ENCODE measurements at regions of chr2 and their contacts with region 1.

Region 1: DNA sequence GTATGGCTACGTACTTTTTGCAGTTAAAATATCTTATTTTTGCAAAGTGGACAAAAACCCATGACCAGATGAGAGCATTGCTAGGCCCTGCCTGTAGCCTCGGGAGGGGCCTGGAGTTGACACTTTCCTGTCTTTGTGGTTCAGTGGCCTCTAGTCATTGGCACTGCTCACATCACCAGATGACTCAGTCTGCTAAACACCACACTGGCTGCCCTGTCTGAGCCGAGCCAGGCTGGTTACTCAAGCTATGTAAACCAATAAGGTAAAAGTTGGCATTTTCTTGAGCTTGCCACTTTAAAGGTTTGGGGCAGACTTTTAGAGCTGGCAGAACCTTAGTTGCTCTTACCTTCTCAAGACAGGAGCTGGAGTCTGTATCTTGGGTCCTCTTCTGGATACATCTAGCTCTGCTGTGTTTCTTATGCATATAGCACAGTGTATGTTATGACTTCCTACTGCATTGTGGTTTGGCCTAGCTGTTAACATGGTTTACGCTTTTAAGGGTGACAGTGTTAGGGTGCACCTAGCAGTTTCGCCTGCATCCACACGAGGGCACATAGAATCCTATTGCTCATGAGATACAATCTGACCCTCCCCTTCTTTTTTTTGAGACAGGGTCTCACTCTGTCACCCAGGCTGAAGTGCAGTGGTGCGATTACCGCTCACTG is 76.4 kb downstream of the AP1S3 start:
- DNase-seq: no peak
- H3K4me3 ChIP-seq: no peak overlapping the region
- H3K4me3 Mint-ChIP-seq: no peak overlapping the region
- H3K27ac Mint-ChIP-seq: peak overlapping the region; percentile 94
- H3K4me1 ChIP-seq: peaks cover 42% of the 10 kb centered on the region
- H3K4me1 Mint-ChIP-seq: peaks cover 48% of the 10 kb centered on the region
- H3K27me3 ChIP-seq: no peaks in the 10 kb centered on the region
- H3K27me3 Mint-ChIP-seq: no peaks in the 10 kb centered on the region
- CTCF ChIP-seq: no peak

Region 2: DNA sequence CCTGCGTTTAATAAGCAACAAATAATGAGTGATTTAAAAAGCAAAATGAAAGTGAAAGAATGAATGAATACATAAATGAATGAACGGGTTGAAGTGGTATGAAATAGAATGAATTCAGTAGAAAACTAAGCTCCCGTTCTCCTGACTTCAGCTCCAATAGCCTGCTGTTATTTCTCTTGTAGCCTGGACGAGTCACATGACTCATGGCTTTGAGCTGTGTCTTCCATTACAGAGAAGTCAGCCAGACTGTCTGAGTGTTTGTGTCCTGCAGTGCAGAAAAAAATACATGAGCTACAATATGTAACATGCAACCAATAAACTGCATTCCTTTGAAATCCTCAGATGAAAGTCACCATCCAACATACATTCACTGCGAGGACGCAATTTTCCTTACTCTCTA is 180.0 kb before region 1 on chr2:
- CTCF ChIA-PET with region 1: no interaction called
- POLR2A ChIA-PET with region 1: no interaction called
- intact Hi-C with region 1: no loop called
- DNase-seq: no peak
- H3K4me3 ChIP-seq: no peak overlapping the region
- H3K4me3 Mint-ChIP-seq: no peak overlapping the region
- H3K27ac Mint-ChIP-seq: no peak overlapping the region
- H3K4me1 ChIP-seq: no peaks in the 10 kb centered on the region
- H3K4me1 Mint-ChIP-seq: no peaks in the 10 kb centered on the region
- H3K27me3 ChIP-seq: no peaks in the 10 kb centered on the region
- H3K27me3 Mint-ChIP-seq: peaks cover 11% of the 10 kb centered on the region
- CTCF ChIP-seq: no peak

Region 3: GRCh38 chr2:223654384-223654915 is 106.5 kb before region 1 on chr2:
- CTCF ChIA-PET with region 1: no interaction called
- POLR2A ChIA-PET with region 1: no interaction called
- intact Hi-C with region 1: no loop called
- DNase-seq: no peak
- H3K4me3 ChIP-seq: no peak overlapping the region
- H3K4me3 Mint-ChIP-seq: no peak overlapping the region
- H3K27ac Mint-ChIP-seq: no peak overlapping the region
- H3K4me1 ChIP-seq: no peaks in the 10 kb centered on the region
- H3K4me1 Mint-ChIP-seq: no peaks in the 10 kb centered on the region
- H3K27me3 ChIP-seq: no peaks in the 10 kb centered on the region
- H3K27me3 Mint-ChIP-seq: peaks cover 15% of the 10 kb centered on the region
- CTCF ChIP-seq: no peak

Region 4: DNA sequence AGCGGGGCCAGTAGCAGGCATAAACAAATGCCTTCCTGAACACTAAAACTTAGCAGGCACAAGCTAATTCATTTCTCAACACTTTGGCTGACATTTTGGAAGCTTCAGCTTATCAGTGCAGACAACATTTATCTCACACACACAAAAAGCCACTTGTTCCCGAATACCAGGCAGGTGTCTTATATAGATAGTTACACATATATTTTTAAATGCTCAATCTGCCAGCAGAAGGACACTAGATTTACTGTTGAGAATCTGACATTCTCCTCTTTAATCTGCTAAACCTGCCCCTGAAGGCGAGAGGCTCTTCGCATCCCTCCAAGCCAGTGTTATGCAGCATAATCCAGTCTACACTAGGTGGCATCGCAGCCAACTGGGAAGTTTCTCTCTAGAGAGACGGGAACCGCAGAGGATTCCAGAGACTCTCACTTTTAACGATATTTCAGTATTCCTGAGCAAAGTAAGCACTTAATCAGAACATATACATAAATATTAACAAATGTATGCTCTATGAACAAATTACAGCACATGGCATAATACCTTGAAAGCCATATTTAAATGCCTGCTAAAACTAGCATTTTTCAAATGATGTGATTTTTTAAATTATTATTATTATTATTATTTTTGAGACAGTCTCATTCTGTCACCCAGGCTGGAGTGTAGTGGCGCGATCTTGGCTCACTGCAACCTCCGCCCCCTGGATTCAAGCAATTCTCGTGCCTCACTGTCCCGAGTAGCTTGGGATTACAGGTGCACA is 68.6 kb before region 1 on chr2:
- CTCF ChIA-PET with region 1: interaction called, 3 read pairs
- POLR2A ChIA-PET with region 1: no interaction called
- intact Hi-C with region 1: loop called (anchors 1 kb)
- DNase-seq: peak; percentile 71 to 76
- H3K4me3 ChIP-seq: no peak overlapping the region
- H3K4me3 Mint-ChIP-seq: no peak overlapping the region
- H3K27ac Mint-ChIP-seq: no peak overlapping the region
- H3K4me1 ChIP-seq: no peaks in the 10 kb centered on the region
- H3K4me1 Mint-ChIP-seq: no peaks in the 10 kb centered on the region
- H3K27me3 ChIP-seq: no peaks in the 10 kb centered on the region
- H3K27me3 Mint-ChIP-seq: no peaks in the 10 kb centered on the region
- CTCF ChIP-seq: peak; percentile 75 to 96

Region 5: GRCh38 chr2:223744573-223744972 is 16.4 kb before region 1 on chr2:
- CTCF ChIA-PET with region 1: interaction called, 3 read pairs
- POLR2A ChIA-PET with region 1: no interaction called
- intact Hi-C with region 1: loop called (anchors 1 kb)
- DNase-seq: peak; percentile 89 to 90
- H3K4me3 ChIP-seq: no peak overlapping the region
- H3K4me3 Mint-ChIP-seq: peak overlapping the region; percentile 52
- H3K27ac Mint-ChIP-seq: peak overlapping the region; percentile 85
- H3K4me1 ChIP-seq: peaks cover 34% of the 10 kb centered on the region
- H3K4me1 Mint-ChIP-seq: peaks cover 37% of the 10 kb centered on the region
- H3K27me3 ChIP-seq: no peaks in the 10 kb centered on the region
- H3K27me3 Mint-ChIP-seq: no peaks in the 10 kb centered on the region
- CTCF ChIP-seq: no peak

Region 6: GRCh38 chr2:223779877-223780276 is 18.9 kb after region 1 on chr2:
- CTCF ChIA-PET with region 1: no interaction called
- POLR2A ChIA-PET with region 1: no interaction called
- intact Hi-C with region 1: no loop called
- DNase-seq: peak; percentile 78 to 81
- H3K4me3 ChIP-seq: no peak overlapping the region
- H3K4me3 Mint-ChIP-seq: no peak overlapping the region
- H3K27ac Mint-ChIP-seq: no peak overlapping the region
- H3K4me1 ChIP-seq: peaks cover 5% of the 10 kb centered on the region; the same call in 1 of the 2 replicates
- H3K4me1 Mint-ChIP-seq: peaks cover 20% of the 10 kb centered on the region
- H3K27me3 ChIP-seq: no peaks in the 10 kb centered on the region
- H3K27me3 Mint-ChIP-seq: no peaks in the 10 kb centered on the region
- CTCF ChIP-seq: peak; percentile 40 to 56

Region 7: GRCh38 chr2:224479826-224480225 is 718.9 kb after region 1 on chr2:
- CTCF ChIA-PET with region 1: no interaction called
- POLR2A ChIA-PET with region 1: no interaction called
- intact Hi-C with region 1: no loop called
- DNase-seq: no peak
- H3K4me3 ChIP-seq: no peak overlapping the region
- H3K4me3 Mint-ChIP-seq: no peak overlapping the region
- H3K27ac Mint-ChIP-seq: no peak overlapping the region
- H3K4me1 ChIP-seq: peaks cover 3% of the 10 kb centered on the region
- H3K4me1 Mint-ChIP-seq: no peaks in the 10 kb centered on the region
- H3K27me3 ChIP-seq: no peaks in the 10 kb centered on the region
- H3K27me3 Mint-ChIP-seq: peaks cover 4% of the 10 kb centered on the region
- CTCF ChIP-seq: no peak

Measured in Caco-2 (cell line).